Spleen (tissue), 13 donors: ENCODE measurements at regions of chr2 and their contacts with region 1.

Region 1: GRCh38 chr2:200703127-200703925 is 108.4 kb upstream of the BZW1 start:
- DNase-seq: no peak
- H3K4me3 ChIP-seq: no peak overlapping the region
- H3K27ac ChIP-seq: no peak overlapping the region
- H3K4me1 ChIP-seq: peaks cover 0 to 6% (median 0%) of the 10 kb centered on the region in 6 donors
- H3K27me3 ChIP-seq: no peaks in the 10 kb centered on the region
- CTCF ChIP-seq: peak in 8 of 11 experiments; percentile 11 to 56 (median 38)
- POLR2A ChIP-seq: no peak

Region 2: DNA sequence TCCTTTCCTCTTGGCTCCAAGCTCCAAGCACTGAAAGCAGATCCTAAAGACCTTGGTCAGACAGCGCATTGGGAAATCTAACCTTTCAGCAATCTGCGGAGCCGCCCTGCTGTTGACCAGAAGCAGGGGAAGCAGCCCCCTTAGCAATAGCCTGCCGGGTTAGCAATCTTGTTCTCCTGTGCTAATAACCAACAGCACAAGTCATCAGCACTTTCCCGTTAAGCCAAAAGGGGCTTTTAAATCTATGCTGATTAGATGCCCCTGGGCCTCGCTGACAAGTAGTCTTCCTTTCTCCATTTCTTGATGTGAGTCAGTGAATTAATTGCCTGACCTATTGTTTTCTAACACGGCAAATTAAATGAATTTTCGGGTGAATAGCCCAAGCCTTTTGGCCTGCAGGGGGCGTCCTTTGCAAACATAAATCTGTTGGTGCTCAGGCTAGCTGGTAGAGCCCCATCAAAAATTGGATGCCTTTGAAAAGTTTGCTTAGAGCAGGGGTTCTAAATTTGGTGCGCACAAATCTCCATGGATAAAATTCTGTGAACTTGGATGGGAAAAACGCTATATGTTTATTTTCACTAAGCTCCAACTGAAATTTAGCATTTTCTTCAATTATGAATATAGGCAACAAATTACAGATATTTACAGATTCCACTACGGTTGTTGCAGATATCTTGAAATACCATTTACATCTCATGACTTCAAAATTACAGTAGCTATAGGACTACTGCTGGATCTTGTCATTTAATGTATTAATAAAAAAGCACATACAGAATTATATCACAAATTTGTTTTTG is 723.3 kb before region 1 on chr2:
- intact Hi-C with region 1: loop called (anchors 10 kb)
- DNase-seq: peak; percentile 92
- H3K4me3 ChIP-seq: peak overlapping the region in 2 of 8 donors; percentile 17 to 31
- H3K27ac ChIP-seq: peak overlapping the region in 5 of 8 donors; percentile 37 to 64 (median 41)
- H3K4me1 ChIP-seq: peaks cover 0 to 25% (median 8%) of the 10 kb centered on the region in 6 donors
- H3K27me3 ChIP-seq: no peaks in the 10 kb centered on the region
- CTCF ChIP-seq: peak; percentile 53 to 88 (median 82)
- POLR2A ChIP-seq: no peak

Region 3: DNA sequence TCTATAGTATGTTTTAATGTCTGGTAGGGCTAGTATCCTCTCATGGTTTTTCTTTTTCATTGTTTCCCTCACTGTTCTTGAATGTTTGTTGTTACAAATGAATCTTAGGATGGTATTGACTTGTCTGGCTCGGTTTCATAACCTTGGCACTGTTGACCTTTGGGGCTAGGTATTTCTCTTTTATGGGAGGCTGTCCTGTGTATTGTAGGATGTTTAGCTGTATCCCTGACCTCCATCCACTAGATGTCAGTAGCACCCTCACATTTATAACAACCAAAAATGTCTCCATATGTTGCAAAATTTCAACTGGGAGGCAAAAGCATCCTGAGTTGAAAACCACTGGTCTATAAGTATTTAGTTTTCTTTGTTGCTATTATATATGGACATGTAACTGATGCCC is 124.5 kb before region 1 on chr2:
- intact Hi-C with region 1: loop called (anchors 10 kb)
- DNase-seq: no peak
- H3K4me3 ChIP-seq: no peak overlapping the region
- H3K27ac ChIP-seq: no peak overlapping the region
- H3K4me1 ChIP-seq: no peaks in the 10 kb centered on the region
- H3K27me3 ChIP-seq: no peaks in the 10 kb centered on the region
- CTCF ChIP-seq: peak in 6 of 11 experiments; percentile 16 to 36 (median 29)
- POLR2A ChIP-seq: no peak

Region 4: GRCh38 chr2:200635251-200635650 is 68.1 kb before region 1 on chr2:
- intact Hi-C with region 1: no loop called
- DNase-seq: no peak
- H3K4me3 ChIP-seq: no peak overlapping the region
- H3K27ac ChIP-seq: peak overlapping the region in 1 of 8 donors; percentile 53
- H3K4me1 ChIP-seq: no peaks in the 10 kb centered on the region
- H3K27me3 ChIP-seq: no peaks in the 10 kb centered on the region
- CTCF ChIP-seq: no peak
- POLR2A ChIP-seq: no peak